Activated CD4-positive, alpha-beta T cell treated with anti-CD3 and anti-CD28 coated beads, Interleukin-2, amount 10 ng/mL, durations not matched to agents 24 days and 14 days (primary cell): ENCODE measurements at regions of chr6 and their contacts with region 1.

Region 1: DNA sequence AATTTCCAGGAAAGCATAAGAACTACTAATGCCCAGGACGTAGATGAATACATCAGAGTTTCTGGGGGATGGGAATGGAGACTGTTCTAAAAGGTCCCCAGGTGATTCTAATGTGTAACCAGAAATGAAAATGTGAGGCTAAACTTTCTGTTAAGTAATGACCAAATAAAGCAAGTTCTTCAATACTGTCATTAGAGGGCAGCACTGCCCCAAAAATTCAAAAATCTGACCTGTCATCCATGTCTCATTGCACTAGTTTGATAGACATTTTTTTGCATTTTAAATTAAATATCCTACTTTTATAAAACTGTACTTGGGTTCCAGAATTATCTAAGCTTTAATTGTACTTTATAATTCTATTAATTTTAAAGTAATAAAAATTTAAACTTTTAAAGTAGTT is 94.9 kb downstream of the RFX6 start:
- DNase-seq: peak; percentile 65
- H3K4me3 Mint-ChIP-seq: no peak overlapping the region
- H3K27ac Mint-ChIP-seq: no peak overlapping the region
- H3K4me1 Mint-ChIP-seq: no peaks in the 10 kb centered on the region
- H3K27me3 Mint-ChIP-seq: peaks cover 4% of the 10 kb centered on the region

Region 2: DNA sequence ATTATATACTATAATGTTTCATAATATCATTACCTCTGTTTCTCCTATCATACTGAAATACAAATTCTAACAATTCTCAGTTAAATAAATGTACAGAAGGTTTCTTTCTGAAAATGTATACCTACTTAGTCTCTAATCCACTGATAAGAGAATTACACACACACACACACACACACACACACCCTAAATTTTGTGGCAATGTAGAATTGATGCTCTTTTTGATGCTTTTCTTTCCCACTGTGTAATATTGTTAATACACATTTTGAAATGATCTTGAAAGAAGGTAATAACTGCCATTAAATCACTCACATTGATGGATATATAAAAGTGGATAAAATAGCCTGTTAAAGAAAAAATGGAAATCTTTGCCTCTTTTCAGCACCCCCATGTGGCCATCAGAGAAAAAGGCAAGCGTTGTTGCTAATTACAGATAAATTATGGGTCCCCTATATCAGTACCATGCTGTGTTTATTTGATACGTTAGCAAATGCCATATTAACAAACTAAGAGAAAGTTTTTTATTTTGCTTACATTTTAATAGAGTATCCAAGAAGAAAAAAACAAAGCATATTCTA is 216.8 kb after region 1 on chr6:
- intact Hi-C with region 1: loop called (anchors 10 kb)
- DNase-seq: no peak
- H3K4me3 Mint-ChIP-seq: no peak overlapping the region
- H3K27ac Mint-ChIP-seq: no peak overlapping the region
- H3K4me1 Mint-ChIP-seq: no peaks in the 10 kb centered on the region
- H3K27me3 Mint-ChIP-seq: no peaks in the 10 kb centered on the region

Region 3: GRCh38 chr6:117317261-117317660 is 345.3 kb after region 1 on chr6:
- intact Hi-C with region 1: loop called (anchors 10 kb)
- DNase-seq: no peak
- H3K4me3 Mint-ChIP-seq: no peak overlapping the region
- H3K27ac Mint-ChIP-seq: no peak overlapping the region
- H3K4me1 Mint-ChIP-seq: no peaks in the 10 kb centered on the region
- H3K27me3 Mint-ChIP-seq: peaks cover 2% of the 10 kb centered on the region